ENCODE measurements at regions of chr1 and their contacts with region 1.

Region 1: GRCh38 chr1:192808518-192809306 is at the start of gene RGS2:
- DNase-seq: peak; percentile 87
- H3K4me3 ChIP-seq: peak within 1 kb of the TSS; percentile 82 to 98 (median 95)
- H3K27ac ChIP-seq: peak within 1 kb of the TSS; percentile 70
- H3K4me1 ChIP-seq: peaks cover 27% of the 10 kb centered on the region
- H3K27me3 ChIP-seq: no peaks in the 10 kb centered on the region
- CTCF ChIP-seq: peak in 1 of 2 donors; percentile 27
- total RNA-seq, gene RGS2: 20.0 to 28.5 TPM

Region 2: GRCh38 chr1:192861860-192862259 is 53.1 kb after region 1 on chr1:
- CTCF ChIA-PET with region 1: no interaction called
- dilution Hi-C with region 1: no loop called
- in situ Hi-C with region 1: no loop called
- intact Hi-C with region 1: loop called (anchors 1 kb)
- DNase-seq: peak; percentile 62
- H3K4me3 ChIP-seq: no peak overlapping the region
- H3K27ac ChIP-seq: no peak overlapping the region
- H3K4me1 ChIP-seq: no peaks in the 10 kb centered on the region
- H3K27me3 ChIP-seq: no peaks in the 10 kb centered on the region
- CTCF ChIP-seq: no peak

Region 3: DNA sequence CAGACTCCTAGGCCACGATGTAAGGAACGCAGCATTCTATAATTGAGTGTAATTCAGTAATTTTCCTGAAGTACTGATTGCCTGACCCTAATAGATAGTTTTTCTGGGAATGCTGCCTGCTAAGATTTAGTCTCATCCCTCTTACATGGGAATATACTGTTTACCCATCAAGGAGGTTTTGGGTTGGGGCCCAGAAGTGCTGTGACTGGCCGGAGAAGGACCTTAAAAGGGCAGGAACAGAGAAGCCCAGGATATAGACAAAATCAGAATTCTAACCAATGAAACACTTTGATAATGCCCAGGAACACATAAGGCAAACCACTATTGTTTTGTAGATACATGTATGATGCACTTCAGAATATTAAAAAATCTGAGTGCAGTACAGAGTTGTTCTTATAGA is 111.7 kb after region 1 on chr1:
- CTCF ChIA-PET with region 1: no interaction called
- dilution Hi-C with region 1: no loop called
- in situ Hi-C with region 1: no loop called
- intact Hi-C with region 1: no loop called
- DNase-seq: no peak
- H3K4me3 ChIP-seq: no peak overlapping the region
- H3K27ac ChIP-seq: no peak overlapping the region
- H3K4me1 ChIP-seq: no peaks in the 10 kb centered on the region
- H3K27me3 ChIP-seq: no peaks in the 10 kb centered on the region
- CTCF ChIP-seq: no peak

Region 4: GRCh38 chr1:192974701-192975100 is 166.0 kb after region 1 on chr1:
- CTCF ChIA-PET with region 1: no interaction called
- dilution Hi-C with region 1: no loop called
- in situ Hi-C with region 1: no loop called
- intact Hi-C with region 1: loop called (anchors 2 kb)
- DNase-seq: peak; percentile 48
- H3K4me3 ChIP-seq: no peak overlapping the region
- H3K27ac ChIP-seq: no peak overlapping the region
- H3K4me1 ChIP-seq: peaks cover 7% of the 10 kb centered on the region
- H3K27me3 ChIP-seq: no peaks in the 10 kb centered on the region
- CTCF ChIP-seq: no peak

Region 5: DNA sequence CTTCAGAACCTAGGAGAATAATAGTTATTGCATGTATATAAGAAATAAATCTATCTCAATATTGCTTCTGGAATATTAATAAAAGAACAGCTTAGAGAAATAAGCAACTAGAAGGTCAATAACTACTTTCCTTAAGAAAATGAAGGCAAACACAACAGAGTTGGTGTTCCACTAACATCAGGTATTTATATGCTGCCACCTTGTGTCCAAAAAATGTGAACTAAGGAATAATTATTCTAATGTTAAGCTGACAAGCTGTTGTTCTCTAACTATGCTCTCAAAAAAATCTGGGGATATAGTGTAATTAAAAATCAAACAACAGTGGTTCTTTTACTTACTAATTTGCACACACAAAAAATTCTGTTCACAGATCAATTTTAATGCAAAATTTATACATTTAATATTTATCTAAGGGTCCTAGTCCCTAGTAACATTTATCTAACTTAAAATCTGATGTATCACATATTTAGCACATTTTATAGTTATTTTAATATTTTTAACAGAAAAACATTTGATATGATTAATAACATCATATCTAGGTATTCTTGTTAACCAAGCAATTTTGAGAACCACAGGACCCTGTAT is 210.8 kb after region 1 on chr1:
- CTCF ChIA-PET with region 1: interaction called, 8 read pairs
- dilution Hi-C with region 1: loop called (anchors 25 kb)
- in situ Hi-C with region 1: loop called (anchors 5 to 10 kb)
- intact Hi-C with region 1: loop called (anchors 1 kb)
- DNase-seq: peak; percentile 39
- H3K4me3 ChIP-seq: no peak overlapping the region
- H3K27ac ChIP-seq: no peak overlapping the region
- H3K4me1 ChIP-seq: no peaks in the 10 kb centered on the region
- H3K27me3 ChIP-seq: no peaks in the 10 kb centered on the region
- CTCF ChIP-seq: peak; percentile 33 to 53

Measured in mammary epithelial cell (primary cell).